Dorsolateral prefrontal cortex (tissue), 120 donors: ENCODE measurements at regions of chr5 and their contacts with region 1.

Region 1: GRCh38 chr5:78984439-78985115 is 533 bp downstream of the ARSB start:
- DNase-seq: peak; percentile 75 to 91 (median 84)
- H3K4me3 ChIP-seq: peak overlapping the region; percentile 51 to 95 (median 82)
- H3K27ac ChIP-seq: peak overlapping the region; percentile 80 to 100 (median 98)
- H3K27me3 ChIP-seq: no peaks in the 10 kb centered on the region
- CTCF ChIP-seq: peak in 51 of 56 donors; percentile 11 to 61 (median 40)

Region 2: GRCh38 chr5:78648359-78649210 is 336.0 kb before region 1 on chr5 and contains the start of gene LHFPL2:
- intact Hi-C with region 1: loop called in 1 of 2 experiments (anchors 10 kb)
- DNase-seq: peak in 7 of 10 donors; percentile 31 to 74 (median 53)
- H3K4me3 ChIP-seq: peak within 1 kb of the TSS; percentile 50 to 89 (median 76)
- H3K27ac ChIP-seq: peak within 1 kb of the TSS in 57 of 59 donors; percentile 31 to 96 (median 86)
- H3K27me3 ChIP-seq: no peaks in the 10 kb centered on the region
- CTCF ChIP-seq: peak in 3 of 56 donors; percentile 2 to 5 (median 3)
- total RNA-seq, gene LHFPL2: 8.2 to 40.9 (median 18.7) TPM

Region 3: DNA sequence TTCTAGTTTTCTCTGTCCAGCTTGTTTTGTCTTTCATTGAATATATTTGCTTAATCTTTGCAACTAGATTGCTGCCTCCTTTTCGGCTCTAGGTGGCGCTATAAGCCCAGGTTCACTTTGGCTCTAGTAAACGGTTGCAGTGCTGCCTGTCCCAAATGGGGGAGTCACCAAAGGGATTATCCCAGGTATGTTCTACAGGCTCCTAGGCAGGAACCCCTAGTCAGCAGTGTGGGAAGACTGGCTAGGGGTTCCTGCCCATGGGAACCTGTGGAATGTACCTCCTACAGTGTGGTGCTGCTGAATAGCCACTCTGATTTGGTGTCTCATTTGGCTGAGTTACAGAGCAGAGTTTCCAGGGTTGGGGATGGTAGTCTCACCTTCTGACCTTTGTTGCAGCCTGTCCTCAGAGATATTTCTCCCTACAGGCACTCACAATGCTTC is 84.6 kb before region 1 on chr5:
- intact Hi-C with region 1: loop called in 1 of 2 experiments (anchors 10 kb)
- DNase-seq: no peak
- H3K4me3 ChIP-seq: no peak overlapping the region
- H3K27ac ChIP-seq: no peak overlapping the region
- H3K27me3 ChIP-seq: no peaks in the 10 kb centered on the region
- CTCF ChIP-seq: peak in 55 of 56 donors; percentile 17 to 63 (median 45)

Region 4: DNA sequence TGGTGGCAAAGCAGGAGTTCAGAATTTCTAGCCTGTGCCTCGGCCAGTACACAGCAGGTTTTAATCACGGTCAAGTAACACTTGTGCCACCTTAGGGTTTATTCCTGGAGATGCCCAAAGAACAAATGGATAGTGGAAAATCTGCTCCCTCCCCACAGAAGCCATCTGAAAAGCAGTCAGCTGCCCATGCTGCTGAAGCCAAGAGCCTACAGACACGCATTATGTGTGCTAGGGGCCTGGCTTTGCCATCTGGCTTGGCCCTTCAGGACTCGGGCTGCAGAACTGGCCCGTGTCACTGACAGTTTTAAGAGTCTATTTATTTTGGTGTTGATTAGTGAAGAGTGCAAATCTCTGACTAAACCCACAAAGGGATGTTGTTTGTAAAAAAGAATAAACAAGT is 10.6 kb before region 1 on chr5:
- intact Hi-C with region 1: loop called in 1 of 2 experiments (anchors 1 kb)
- DNase-seq: peak; percentile 26 to 80 (median 60)
- H3K4me3 ChIP-seq: peak overlapping the region in 20 of 59 donors; percentile 1 to 48 (median 17)
- H3K27ac ChIP-seq: peak overlapping the region in 57 of 59 donors; percentile 12 to 85 (median 66)
- H3K27me3 ChIP-seq: no peaks in the 10 kb centered on the region
- CTCF ChIP-seq: peak in 3 of 56 donors; percentile 12 to 19 (median 12)

Region 5: GRCh38 chr5:79020861-79021561 is 36.4 kb after region 1 on chr5:
- intact Hi-C with region 1: loop called in 1 of 2 experiments (anchors 5 kb)
- DNase-seq: peak; percentile 28 to 75 (median 63)
- H3K4me3 ChIP-seq: peak overlapping the region in 45 of 59 donors; percentile 3 to 57 (median 29)
- H3K27ac ChIP-seq: no peak overlapping the region
- H3K27me3 ChIP-seq: no peaks in the 10 kb centered on the region
- CTCF ChIP-seq: peak; percentile 55 to 94 (median 84)

Region 6: GRCh38 chr5:79235634-79236363 is 251.2 kb after region 1 on chr5 and contains the start of gene JMY:
- intact Hi-C with region 1: loop called (anchors 5 to 10 kb)
- DNase-seq: peak; percentile 72 to 90 (median 88)
- H3K4me3 ChIP-seq: peak within 1 kb of the TSS; percentile 64 to 99 (median 92)
- H3K27ac ChIP-seq: peak within 1 kb of the TSS; percentile 41 to 95 (median 87)
- H3K27me3 ChIP-seq: no peaks in the 10 kb centered on the region
- CTCF ChIP-seq: peak in 25 of 56 donors; percentile 4 to 61 (median 26)
- total RNA-seq, gene JMY: 21.8 to 40.5 (median 29.8) TPM